Adrenal gland (tissue), 19 donors: ENCODE measurements at regions of chr2 and their contacts with region 1.

Region 1: DNA sequence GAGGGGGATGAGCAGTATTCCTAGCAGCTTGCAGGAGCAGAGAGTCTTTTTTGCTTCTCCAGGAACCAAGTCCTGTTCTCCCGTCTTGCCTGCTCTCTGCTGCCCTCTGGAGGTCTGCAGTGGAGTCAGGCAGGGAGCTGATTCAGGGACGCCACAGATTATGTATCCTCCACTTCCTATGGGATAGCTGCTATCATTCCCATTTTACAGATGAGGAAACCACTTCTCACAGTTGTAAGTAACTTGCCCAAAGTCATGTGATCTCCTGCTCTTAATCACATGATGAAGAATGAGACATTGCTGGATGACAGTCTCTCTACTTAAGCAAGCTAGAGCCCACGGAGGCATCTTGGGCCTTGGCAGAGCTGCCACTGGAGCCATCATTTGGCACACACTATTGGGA is 8.3 kb downstream of the SLC4A5 start:
- DNase-seq: peak; percentile 72 to 89 (median 79)
- H3K4me3 ChIP-seq: no peak overlapping the region
- H3K27ac ChIP-seq: no peak overlapping the region
- H3K4me1 ChIP-seq: no peaks in the 10 kb centered on the region
- H3K27me3 ChIP-seq: no peaks in the 10 kb centered on the region
- CTCF ChIP-seq: peak; percentile 71 to 98 (median 84)
- POLR2A ChIP-seq: no peak

Region 2: GRCh38 chr2:74089816-74090745 is 244.9 kb before region 1 on chr2:
- intact Hi-C with region 1: no loop called
- DNase-seq: no peak
- H3K4me3 ChIP-seq: no peak overlapping the region
- H3K27ac ChIP-seq: no peak overlapping the region
- H3K4me1 ChIP-seq: no peaks in the 10 kb centered on the region
- H3K27me3 ChIP-seq: no peaks in the 10 kb centered on the region
- CTCF ChIP-seq: no peak
- POLR2A ChIP-seq: no peak

Region 3: DNA sequence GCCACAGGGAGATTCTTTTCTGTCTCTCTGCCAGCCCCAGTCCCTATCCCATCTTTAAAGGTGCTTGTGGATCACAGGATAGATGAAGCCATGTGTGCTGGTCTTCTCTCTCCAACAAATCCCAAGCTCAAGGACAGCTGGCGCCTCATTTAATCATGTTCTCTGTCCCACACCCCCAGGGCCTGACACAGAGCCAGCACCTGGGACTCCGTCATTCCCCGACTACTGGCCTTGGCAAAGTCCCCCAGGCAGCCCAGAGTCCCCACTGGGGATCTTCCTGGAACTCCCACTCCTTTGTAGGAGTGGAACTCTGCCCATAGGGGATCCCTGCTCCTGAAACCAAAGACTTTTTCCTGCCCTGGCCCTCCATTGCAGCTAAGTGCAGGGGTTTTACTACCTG is 75.7 kb before region 1 on chr2:
- intact Hi-C with region 1: loop called in 1 of 2 experiments (anchors 5 kb)
- DNase-seq: peak in 1 of 7 donors; percentile 5
- H3K4me3 ChIP-seq: no peak overlapping the region
- H3K27ac ChIP-seq: no peak overlapping the region
- H3K4me1 ChIP-seq: no peaks in the 10 kb centered on the region
- H3K27me3 ChIP-seq: no peaks in the 10 kb centered on the region
- CTCF ChIP-seq: no peak
- POLR2A ChIP-seq: no peak

Region 4: DNA sequence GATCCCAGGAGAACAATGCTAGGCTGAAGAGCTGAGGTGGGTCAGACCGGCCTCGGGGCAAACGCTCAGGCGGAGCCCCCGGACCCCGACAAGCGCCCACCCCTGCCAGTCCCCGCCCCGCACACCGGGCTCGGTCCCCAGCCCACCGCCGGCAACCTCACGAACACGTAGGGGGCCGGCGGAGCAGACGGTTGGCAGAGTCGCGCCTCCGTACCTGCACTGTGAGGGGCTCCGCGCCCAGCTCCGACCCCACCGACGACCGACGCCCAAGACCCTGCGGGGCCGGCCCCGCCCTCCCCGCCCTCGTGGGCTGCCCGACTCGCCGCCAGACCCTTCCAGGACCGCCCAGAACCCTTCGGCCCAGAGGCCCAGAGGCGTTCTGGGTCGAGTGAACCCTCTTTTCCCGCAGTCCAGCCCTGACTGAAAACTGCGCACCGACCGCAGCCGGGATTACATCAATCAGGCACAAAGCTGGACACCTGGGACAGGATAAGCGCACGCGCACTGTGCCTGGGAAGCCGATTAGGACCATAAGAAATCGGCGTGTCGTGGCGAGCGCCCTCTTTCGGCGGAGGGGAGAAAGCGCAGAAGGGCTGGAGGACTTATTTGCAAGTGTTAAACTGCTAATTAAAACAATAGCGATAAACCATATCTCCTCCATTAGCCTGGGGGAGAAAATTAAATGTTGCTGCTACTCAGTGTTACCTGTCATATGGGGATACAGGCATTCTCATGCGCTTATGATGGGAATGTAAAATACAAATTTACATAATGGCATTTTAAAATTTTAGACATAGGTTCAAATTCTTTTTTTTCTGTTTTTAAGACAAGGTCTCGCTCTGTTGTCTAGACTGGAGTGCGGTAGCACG is 56.9 kb after region 1 on chr2:
- intact Hi-C with region 1: loop called (anchors 10 kb)
- DNase-seq: peak; percentile 89 to 95 (median 93)
- H3K4me3 ChIP-seq: peak overlapping the region in 3 of 4 donors; percentile 2 to 85 (median 78)
- H3K27ac ChIP-seq: peak overlapping the region in 4 of 5 donors; percentile 64 to 92 (median 86)
- H3K4me1 ChIP-seq: peaks cover 20 to 40% of the 10 kb centered on the region in 2 donors
- H3K27me3 ChIP-seq: no peaks in the 10 kb centered on the region
- CTCF ChIP-seq: peak; percentile 91 to 98 (median 94)
- POLR2A ChIP-seq: peak in 1 of 2 donors; percentile 37

Region 5: GRCh38 chr2:74747341-74748188 is 412.6 kb after region 1 on chr2:
- intact Hi-C with region 1: no loop called
- DNase-seq: peak; percentile 30 to 74 (median 60)
- H3K4me3 ChIP-seq: no peak overlapping the region
- H3K27ac ChIP-seq: no peak overlapping the region
- H3K4me1 ChIP-seq: no peaks in the 10 kb centered on the region
- H3K27me3 ChIP-seq: peaks cover 4% of the 10 kb centered on the region
- CTCF ChIP-seq: no peak
- POLR2A ChIP-seq: no peak